MCF 10A (cell line): ENCODE measurements at regions of chrX and their contacts with region 1.

Region 1: GRCh38 chrX:25144043-25144940 is 128.5 kb upstream of the ARX start:
- DNase-seq: peak; percentile 60
- H3K4me3 Mint-ChIP-seq: peak overlapping the region; percentile 54
- H3K27ac Mint-ChIP-seq: no peak overlapping the region
- H3K4me1 Mint-ChIP-seq: no peaks in the 10 kb centered on the region
- H3K27me3 Mint-ChIP-seq: peaks cover under 1% of the 10 kb centered on the region
- CTCF ChIP-seq: peak; percentile 74

Region 2: DNA sequence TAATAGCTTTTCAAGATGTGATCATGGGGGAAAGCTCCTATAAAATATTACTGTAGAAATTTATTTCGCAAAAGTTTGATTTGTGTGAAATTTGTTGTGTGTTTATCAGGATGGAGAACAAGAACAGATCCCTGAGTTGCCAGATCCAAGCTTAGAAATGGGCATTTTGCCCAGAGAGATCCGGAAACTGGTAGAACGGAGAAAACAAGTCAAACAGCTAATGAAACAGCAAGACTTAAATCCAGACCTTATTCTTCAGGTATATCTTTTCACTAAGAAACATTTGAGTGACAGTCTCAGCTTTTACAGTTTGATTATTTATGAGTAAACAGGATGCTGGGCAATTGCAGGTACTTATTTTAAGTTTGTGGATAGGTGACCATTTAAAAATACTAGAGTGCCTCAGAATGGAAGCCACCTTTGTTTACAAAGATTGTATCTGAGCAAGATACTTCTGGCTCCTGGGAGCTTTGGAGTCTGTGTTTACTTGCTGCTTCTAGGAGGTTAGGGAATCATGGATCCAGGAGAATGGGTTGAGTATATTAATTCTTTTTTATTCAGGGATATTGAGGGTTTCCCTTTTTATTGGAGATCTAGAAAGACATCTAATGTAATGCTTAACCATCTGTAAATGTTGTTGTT is 396.0 kb before region 1 on chrX:
- CTCF ChIA-PET with region 1: interaction called, 36 read pairs
- POLR2A ChIA-PET with region 1: no interaction called
- intact Hi-C with region 1: loop called (anchors 1 kb)
- DNase-seq: no peak
- H3K4me3 Mint-ChIP-seq: no peak overlapping the region
- H3K27ac Mint-ChIP-seq: no peak overlapping the region
- H3K4me1 Mint-ChIP-seq: no peaks in the 10 kb centered on the region
- H3K27me3 Mint-ChIP-seq: peaks cover 34% of the 10 kb centered on the region
- CTCF ChIP-seq: no peak

Region 3: DNA sequence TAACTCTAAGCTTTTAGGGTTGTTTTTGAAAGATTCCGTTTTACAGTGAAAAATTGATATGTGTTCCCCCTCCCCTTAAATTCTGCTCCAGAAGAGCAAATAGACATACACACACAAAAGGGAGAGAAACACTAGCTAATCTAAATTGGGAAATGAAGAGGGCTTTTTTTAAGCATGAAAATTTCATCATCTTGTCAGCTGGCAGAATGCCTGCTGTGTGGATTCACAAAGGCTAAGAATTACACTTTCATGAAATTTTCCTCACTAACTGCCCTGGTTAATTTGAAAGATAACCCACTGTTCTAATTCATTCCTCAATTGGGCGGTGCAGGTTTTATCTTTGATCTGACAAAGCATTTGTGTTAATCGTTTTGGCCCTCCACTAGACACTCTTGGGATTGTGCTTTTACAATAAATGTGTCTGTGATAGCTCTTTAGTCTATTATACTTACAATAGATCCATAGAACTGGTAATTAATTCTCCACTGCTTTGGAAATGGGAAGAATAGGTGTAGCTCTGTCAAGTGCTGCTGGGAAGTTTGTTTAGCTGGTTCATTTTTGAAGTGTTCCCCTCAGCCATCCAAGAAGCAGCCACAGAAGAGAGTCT is 297.6 kb before region 1 on chrX:
- CTCF ChIA-PET with region 1: interaction called, 198 read pairs
- POLR2A ChIA-PET with region 1: no interaction called
- intact Hi-C with region 1: no loop called
- DNase-seq: peak; percentile 37
- H3K4me3 Mint-ChIP-seq: no peak overlapping the region
- H3K27ac Mint-ChIP-seq: no peak overlapping the region
- H3K4me1 Mint-ChIP-seq: no peaks in the 10 kb centered on the region
- H3K27me3 Mint-ChIP-seq: peaks cover 4% of the 10 kb centered on the region
- CTCF ChIP-seq: no peak

Region 4: GRCh38 chrX:25131055-25131454 is 13.2 kb before region 1 on chrX:
- CTCF ChIA-PET with region 1: interaction called, 25 read pairs
- POLR2A ChIA-PET with region 1: no interaction called
- intact Hi-C with region 1: no loop called
- DNase-seq: peak; percentile 5
- H3K4me3 Mint-ChIP-seq: no peak overlapping the region
- H3K27ac Mint-ChIP-seq: no peak overlapping the region
- H3K4me1 Mint-ChIP-seq: no peaks in the 10 kb centered on the region
- H3K27me3 Mint-ChIP-seq: peaks cover 49% of the 10 kb centered on the region
- CTCF ChIP-seq: no peak

Region 5: DNA sequence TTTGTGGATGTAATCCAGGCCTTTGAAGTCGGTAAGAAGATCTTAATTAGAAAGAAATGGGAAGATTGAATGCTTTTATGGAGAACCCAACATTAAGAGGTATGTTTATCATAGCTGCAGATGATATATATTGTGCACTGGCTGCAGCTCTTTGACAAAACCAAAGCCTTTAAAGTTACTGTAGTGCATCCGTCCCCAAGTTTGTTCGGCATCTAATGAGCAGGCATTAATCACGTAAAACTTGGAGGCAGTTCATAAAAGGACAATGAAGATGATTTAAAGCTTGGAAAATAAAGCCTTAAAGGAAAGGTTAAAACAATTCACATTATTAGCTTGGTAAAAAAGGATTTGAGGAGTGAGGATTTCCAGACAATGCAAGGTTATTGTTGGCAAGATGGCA is 22.3 kb after region 1 on chrX:
- CTCF ChIA-PET with region 1: interaction called, 10 read pairs
- POLR2A ChIA-PET with region 1: no interaction called
- intact Hi-C with region 1: no loop called
- DNase-seq: no peak
- H3K4me3 Mint-ChIP-seq: no peak overlapping the region
- H3K27ac Mint-ChIP-seq: no peak overlapping the region
- H3K4me1 Mint-ChIP-seq: no peaks in the 10 kb centered on the region
- H3K27me3 Mint-ChIP-seq: peaks cover 17% of the 10 kb centered on the region
- CTCF ChIP-seq: no peak

Region 6: GRCh38 chrX:25810202-25810601 is 665.9 kb after region 1 on chrX:
- CTCF ChIA-PET with region 1: no interaction called
- POLR2A ChIA-PET with region 1: no interaction called
- intact Hi-C with region 1: no loop called
- DNase-seq: peak; percentile 42
- H3K4me3 Mint-ChIP-seq: no peak overlapping the region
- H3K27ac Mint-ChIP-seq: no peak overlapping the region
- H3K4me1 Mint-ChIP-seq: no peaks in the 10 kb centered on the region
- H3K27me3 Mint-ChIP-seq: no peaks in the 10 kb centered on the region
- CTCF ChIP-seq: no peak